K562 (cell line): ENCODE measurements at regions of chr15 and their contacts with region 1.

Region 1: GRCh38 chr15:34374816-34375215 is 7.8 kb upstream of the LPCAT4 start:
- DNase-seq: no peak
- ATAC-seq: no peak
- H3K4me3 ChIP-seq: no peak overlapping the region
- H3K27ac ChIP-seq: no peak overlapping the region
- H3K4me1 ChIP-seq: no peaks in the 10 kb centered on the region
- H3K27me3 ChIP-seq: peaks cover 0 to 7% of the 10 kb centered on the region in 2 experiments; a peak in 1 of 5 replicates
- CTCF ChIP-seq: no peak
- EP300 ChIP-seq: no peak
- POLR2A ChIP-seq: no peak
- RAD21 ChIP-seq: no peak

Region 2: DNA sequence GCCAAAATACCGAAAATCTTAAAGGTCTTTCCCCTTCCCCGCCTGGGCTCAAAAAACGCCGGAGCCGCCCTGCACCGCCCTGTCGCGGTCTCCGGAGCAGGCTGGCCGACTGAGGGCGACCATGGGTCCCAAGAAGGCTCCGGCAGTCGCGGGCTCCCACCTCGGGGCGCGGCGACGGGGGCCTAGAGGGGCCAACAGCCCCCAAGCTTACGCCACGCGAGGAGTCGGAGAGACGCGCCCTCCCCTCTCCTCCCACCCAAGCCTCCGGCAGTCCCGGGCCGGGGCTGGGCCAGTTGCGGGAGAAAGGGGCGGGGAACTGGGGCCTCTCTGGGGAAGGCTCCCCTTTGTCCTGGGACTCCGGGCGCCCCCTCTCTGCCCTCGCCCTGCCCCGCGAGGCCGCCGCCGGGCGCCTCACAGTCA is 139.4 kb after region 1 on chr15:
- CTCF ChIA-PET with region 1: no interaction called
- POLR2A ChIA-PET with region 1: no interaction called
- in situ Hi-C with region 1: loop called (anchors 10 kb)
- intact Hi-C with region 1: no loop called
- DNase-seq: peak; percentile 49 to 85 (median 75)
- ATAC-seq: peak; percentile 88
- H3K4me3 ChIP-seq: peak overlapping the region; percentile 63
- H3K27ac ChIP-seq: peak overlapping the region; percentile 39; the same call in 2 of the 3 replicates
- H3K4me1 ChIP-seq: peaks cover 9 to 14% of the 10 kb centered on the region in 2 experiments; a peak in 4 of 5 replicates
- H3K27me3 ChIP-seq: peaks cover 3 to 6% of the 10 kb centered on the region in 2 experiments; a peak in 3 of 5 replicates
- CTCF ChIP-seq: no peak
- EP300 ChIP-seq: no peak
- POLR2A ChIP-seq: no peak
- RAD21 ChIP-seq: no peak